A673 (cell line): ENCODE measurements at regions of chr6 and their contacts with region 1.

Region 1: DNA sequence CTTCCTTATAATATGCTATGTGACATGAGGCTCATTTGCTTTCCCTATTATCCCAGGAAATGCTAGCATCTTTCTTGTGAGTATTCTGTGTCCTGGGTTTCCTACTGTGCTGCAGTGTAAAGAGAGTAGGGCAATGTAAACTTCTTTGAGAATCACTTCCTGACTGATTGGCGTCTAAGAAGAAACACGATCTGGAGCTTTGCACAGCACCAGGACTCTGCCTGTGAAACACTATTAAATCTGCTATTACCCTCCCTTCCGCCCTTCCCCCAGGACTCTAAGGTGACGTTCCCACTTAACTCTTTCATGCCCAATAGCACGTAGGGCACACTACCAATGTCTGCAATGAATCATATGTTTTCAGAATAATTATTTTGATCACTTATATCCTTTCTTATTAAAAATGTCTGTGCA is 607.3 kb upstream of the CITED2 start:
- DNase-seq: peak; percentile 97
- H3K4me3 ChIP-seq: peak overlapping the region; percentile 11
- H3K27ac ChIP-seq: peak overlapping the region; percentile 89
- H3K4me1 ChIP-seq: peaks cover 53% of the 10 kb centered on the region
- H3K27me3 ChIP-seq: no peaks in the 10 kb centered on the region
- CTCF ChIP-seq: no peak

Region 2: GRCh38 chr6:139547111-139547776 is 434.5 kb before region 1 on chr6:
- CTCF ChIA-PET with region 1: no interaction called
- POLR2A ChIA-PET with region 1: no interaction called
- intact Hi-C with region 1: loop called (anchors 5 kb)
- DNase-seq: peak; percentile 96
- H3K4me3 ChIP-seq: peak overlapping the region; percentile 16
- H3K27ac ChIP-seq: peak overlapping the region; percentile 93
- H3K4me1 ChIP-seq: peaks cover 48% of the 10 kb centered on the region
- H3K27me3 ChIP-seq: no peaks in the 10 kb centered on the region
- CTCF ChIP-seq: no peak

Region 3: GRCh38 chr6:139881728-139882211 is 100.0 kb before region 1 on chr6:
- CTCF ChIA-PET with region 1: no interaction called
- POLR2A ChIA-PET with region 1: no interaction called
- intact Hi-C with region 1: loop called (anchors 5 kb)
- DNase-seq: peak; percentile 79
- H3K4me3 ChIP-seq: no peak overlapping the region
- H3K27ac ChIP-seq: peak overlapping the region; percentile 79
- H3K4me1 ChIP-seq: peaks cover 36% of the 10 kb centered on the region
- H3K27me3 ChIP-seq: no peaks in the 10 kb centered on the region
- CTCF ChIP-seq: peak; percentile 76

Region 4: GRCh38 chr6:140414966-140415660 is 433.3 kb after region 1 on chr6:
- CTCF ChIA-PET with region 1: no interaction called
- POLR2A ChIA-PET with region 1: no interaction called
- intact Hi-C with region 1: no loop called
- DNase-seq: peak; percentile 59
- H3K4me3 ChIP-seq: no peak overlapping the region
- H3K27ac ChIP-seq: no peak overlapping the region
- H3K4me1 ChIP-seq: peaks cover 7% of the 10 kb centered on the region
- H3K27me3 ChIP-seq: no peaks in the 10 kb centered on the region
- CTCF ChIP-seq: no peak

Region 5: GRCh38 chr6:141634269-141634668 is 1652.5 kb after region 1 on chr6:
- CTCF ChIA-PET with region 1: no interaction called
- POLR2A ChIA-PET with region 1: no interaction called
- intact Hi-C with region 1: loop called (anchors 2 kb)
- DNase-seq: no peak
- H3K4me3 ChIP-seq: no peak overlapping the region
- H3K27ac ChIP-seq: peak overlapping the region; percentile 100
- H3K4me1 ChIP-seq: peaks cover 48% of the 10 kb centered on the region
- H3K27me3 ChIP-seq: no peaks in the 10 kb centered on the region
- CTCF ChIP-seq: no peak